H1 (cell line): ENCODE measurements at regions of chr12 and their contacts with region 1.

Region 1: GRCh38 chr12:121301876-121302275 is 5.4 kb upstream of the CAMKK2 start:
- DNase-seq: no peak
- H3K4me3 ChIP-seq: no peak overlapping the region
- H3K27ac ChIP-seq: no peak overlapping the region
- H3K4me1 ChIP-seq: no peaks in the 10 kb centered on the region
- H3K27me3 ChIP-seq: no peaks in the 10 kb centered on the region
- CTCF ChIP-seq: no peak
- EP300 ChIP-seq: no peak
- POLR2A ChIP-seq: no peak
- RAD21 ChIP-seq: no peak

Region 2: DNA sequence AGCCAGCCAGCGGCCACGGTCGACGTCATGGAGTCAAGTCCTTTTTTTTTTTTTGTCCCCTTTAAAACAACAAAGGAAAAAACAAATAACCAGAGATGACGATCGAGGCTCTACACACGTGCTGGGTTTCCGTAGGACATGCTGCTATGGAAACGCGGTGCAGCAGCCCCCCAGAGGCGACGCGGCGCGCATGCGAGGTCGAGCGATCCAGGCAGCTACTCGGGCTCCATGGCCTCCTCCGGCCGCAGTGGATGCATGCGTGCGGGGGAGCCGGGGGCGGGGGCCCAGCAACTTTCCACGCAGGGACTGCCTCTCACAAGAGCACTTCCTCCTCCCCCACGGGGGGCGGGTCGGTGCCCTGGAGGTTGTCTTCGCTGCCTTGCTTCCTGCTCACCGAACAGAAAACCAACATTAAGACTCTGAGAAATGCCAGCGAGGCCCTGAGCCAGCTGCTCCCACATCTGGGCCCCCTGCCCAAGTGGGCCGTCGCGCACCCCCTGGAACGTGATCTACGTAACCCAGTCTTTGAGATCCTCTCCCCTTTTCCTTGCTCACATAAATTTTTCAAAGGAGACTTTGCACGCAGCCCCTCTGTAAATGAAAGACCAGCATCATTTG is 61.3 kb before region 1 on chr12:
- CTCF ChIA-PET with region 1: no interaction called
- POLR2A ChIA-PET with region 1: no interaction called
- DNase-seq: peak in 1 of 2 experiments; percentile 61
- H3K4me3 ChIP-seq: no peak overlapping the region
- H3K27ac ChIP-seq: no peak overlapping the region
- H3K4me1 ChIP-seq: peaks cover 0 to 16% (median 7%) of the 10 kb centered on the region in 4 experiments; a peak in 6 of 7 replicates
- H3K27me3 ChIP-seq: no peaks in the 10 kb centered on the region
- CTCF ChIP-seq: peak in 2 of 3 experiments; percentile 11 to 24; a peak in 2 of 4 replicates
- EP300 ChIP-seq: no peak
- POLR2A ChIP-seq: no peak
- RAD21 ChIP-seq: no peak

Region 3: DNA sequence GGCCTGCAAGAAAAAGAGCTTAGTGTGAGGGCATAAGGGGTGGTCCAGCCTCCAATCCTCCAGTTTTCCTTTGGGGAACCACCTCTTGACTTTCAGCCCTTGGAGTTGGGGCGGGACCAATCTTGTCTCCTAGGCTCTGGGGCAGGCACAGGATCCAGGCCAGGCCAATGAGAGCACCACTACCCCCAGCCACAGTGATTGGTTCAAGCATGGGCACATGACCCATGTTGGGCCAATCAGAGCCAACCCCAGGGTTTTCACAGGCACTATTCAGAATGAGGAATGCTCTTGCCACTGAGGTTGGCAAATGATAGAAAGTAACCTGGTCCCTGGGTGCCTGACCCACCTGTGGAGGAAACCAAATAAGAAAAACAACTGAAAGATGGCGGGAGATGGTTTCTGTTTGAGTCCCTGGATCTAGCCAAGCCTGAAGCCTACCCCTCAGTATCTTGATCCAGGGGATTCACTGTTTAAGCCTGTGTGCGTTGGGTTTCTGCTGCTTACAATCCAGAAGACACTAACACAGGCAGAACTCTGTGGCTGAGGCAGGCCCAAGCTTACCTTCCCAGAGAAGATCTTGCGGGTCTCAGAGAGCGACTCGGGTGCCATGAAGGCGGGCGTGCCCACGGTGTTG is 49.0 kb before region 1 on chr12:
- CTCF ChIA-PET with region 1: no interaction called
- POLR2A ChIA-PET with region 1: no interaction called
- DNase-seq: no peak
- H3K4me3 ChIP-seq: no peak overlapping the region
- H3K27ac ChIP-seq: no peak overlapping the region
- H3K4me1 ChIP-seq: no peaks in the 10 kb centered on the region
- H3K27me3 ChIP-seq: no peaks in the 10 kb centered on the region
- CTCF ChIP-seq: no peak
- EP300 ChIP-seq: no peak
- POLR2A ChIP-seq: no peak
- RAD21 ChIP-seq: no peak

Region 4: GRCh38 chr12:121318121-121318520 is 16.2 kb after region 1 on chr12:
- CTCF ChIA-PET with region 1: interaction called, 4 read pairs
- POLR2A ChIA-PET with region 1: interaction called, 11 read pairs
- DNase-seq: no peak
- H3K4me3 ChIP-seq: no peak overlapping the region
- H3K27ac ChIP-seq: no peak overlapping the region
- H3K4me1 ChIP-seq: no peaks in the 10 kb centered on the region
- H3K27me3 ChIP-seq: no peaks in the 10 kb centered on the region
- CTCF ChIP-seq: no peak
- EP300 ChIP-seq: no peak
- POLR2A ChIP-seq: no peak
- RAD21 ChIP-seq: no peak